HEK293 (cell line): ENCODE measurements at regions of chr19 and their contacts with region 1.

Region 1: GRCh38 chr19:48795055-48795684 is 15.7 kb downstream of the BCAT2 start:
- H3K4me3 ChIP-seq: peak overlapping the region; percentile 54
- H3K27ac ChIP-seq: no peak overlapping the region; the same call in 1 of the 2 replicates
- H3K4me1 ChIP-seq: no peaks in the 10 kb centered on the region
- CTCF ChIP-seq: peak; percentile 99

Region 2: GRCh38 chr19:48780631-48781391 is 14.4 kb before region 1 on chr19:
- CTCF ChIA-PET with region 1: interaction called, 10 read pairs
- POLR2A ChIA-PET with region 1: no interaction called
- H3K4me3 ChIP-seq: no peak overlapping the region
- H3K27ac ChIP-seq: no peak overlapping the region
- H3K4me1 ChIP-seq: no peaks in the 10 kb centered on the region
- CTCF ChIP-seq: no peak

Region 3: DNA sequence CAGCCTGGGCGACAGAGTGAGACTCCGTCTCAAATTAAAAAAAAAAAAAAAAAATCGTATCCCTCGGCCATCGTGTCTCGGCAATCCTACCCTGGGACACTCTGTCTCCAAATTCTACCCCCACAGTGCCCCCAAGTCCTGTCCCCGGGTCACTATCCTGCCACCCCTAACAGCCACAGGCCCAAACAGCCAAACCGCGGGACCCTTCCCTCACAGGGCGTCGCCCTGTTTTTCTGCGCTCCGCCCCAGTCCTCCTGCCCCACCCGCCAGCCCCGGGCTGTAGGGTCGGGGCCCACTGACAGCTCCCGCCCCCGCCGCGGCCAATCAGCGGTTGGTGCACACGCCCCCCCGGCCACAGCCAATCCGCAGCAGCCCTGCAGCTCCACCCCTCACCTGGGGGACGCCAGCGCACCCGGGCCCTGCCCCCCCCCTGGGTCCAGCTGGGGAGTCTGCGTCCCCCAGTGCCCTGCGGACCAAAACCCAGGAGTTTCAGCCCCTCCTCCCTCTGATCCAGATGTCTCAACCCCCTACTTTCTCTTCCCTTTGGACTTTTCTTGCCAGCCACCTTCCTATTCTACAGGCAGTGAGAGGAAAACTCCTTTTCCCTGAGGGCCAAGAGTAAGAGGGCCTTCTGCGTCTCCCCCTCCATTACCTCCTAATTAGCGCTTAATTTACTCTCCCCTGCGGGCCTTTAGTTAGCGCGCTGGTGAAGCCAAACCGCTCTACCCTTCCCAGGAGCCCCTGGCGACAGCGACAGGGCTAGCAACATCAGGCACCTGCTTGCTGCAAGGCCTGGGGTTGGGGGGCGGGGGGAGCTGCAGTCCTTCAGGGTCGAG is 17.1 kb after region 1 on chr19:
- CTCF ChIA-PET with region 1: interaction called, 22 read pairs
- POLR2A ChIA-PET with region 1: interaction called, 28 read pairs
- H3K4me3 ChIP-seq: peak overlapping the region; percentile 22
- H3K27ac ChIP-seq: peak overlapping the region; percentile 38
- H3K4me1 ChIP-seq: peaks cover 5% of the 10 kb centered on the region
- CTCF ChIP-seq: 0 out of 2 replicates have a peak, but pooled peaks have one; percentile 3

Region 4: GRCh38 chr19:48826606-48827020 is 31.4 kb after region 1 on chr19:
- CTCF ChIA-PET with region 1: interaction called, 29 read pairs
- POLR2A ChIA-PET with region 1: interaction called, 3 read pairs
- H3K4me3 ChIP-seq: no peak overlapping the region
- H3K27ac ChIP-seq: no peak overlapping the region
- H3K4me1 ChIP-seq: no peaks in the 10 kb centered on the region
- CTCF ChIP-seq: no peak

Region 5: GRCh38 chr19:48881741-48882657 is 86.8 kb after region 1 on chr19:
- CTCF ChIA-PET with region 1: no interaction called
- POLR2A ChIA-PET with region 1: no interaction called
- H3K4me3 ChIP-seq: no peak overlapping the region
- H3K27ac ChIP-seq: no peak overlapping the region
- H3K4me1 ChIP-seq: no peaks in the 10 kb centered on the region
- CTCF ChIP-seq: no peak

Region 6: GRCh38 chr19:48970923-48971395 is 175.8 kb after region 1 on chr19:
- CTCF ChIA-PET with region 1: interaction called, 63 read pairs
- POLR2A ChIA-PET with region 1: interaction called, 9 read pairs
- H3K4me3 ChIP-seq: no peak overlapping the region
- H3K27ac ChIP-seq: no peak overlapping the region
- H3K4me1 ChIP-seq: 0 out of 2 replicates have a peak, but pooled peaks cover 4% of the 10 kb centered on the region
- CTCF ChIP-seq: peak; percentile 91